Cardiac septum (tissue), 1 donor: ENCODE measurements at regions of chr3 and their contacts with region 1.

Region 1: DNA sequence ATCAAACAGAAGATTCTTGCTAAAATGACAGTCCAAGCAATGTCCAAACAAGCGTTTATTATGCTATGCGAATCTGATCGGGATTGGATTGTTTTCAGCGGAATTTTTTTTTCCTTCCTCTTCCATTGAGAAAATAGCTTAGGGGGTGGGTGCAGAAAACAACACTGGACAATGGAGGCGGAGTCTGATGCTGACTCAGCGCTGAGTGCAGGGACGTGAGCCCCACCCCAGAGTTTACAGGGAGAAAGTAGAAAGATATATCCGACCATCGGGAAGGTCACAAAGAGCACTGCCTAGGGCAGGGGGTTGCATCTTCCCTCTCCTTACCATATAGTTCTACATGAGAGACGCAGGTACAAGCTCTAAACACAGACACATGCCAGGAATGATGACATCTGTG is 117.0 kb downstream of the FOXP1 start:
- DNase-seq: no peak

Region 2: DNA sequence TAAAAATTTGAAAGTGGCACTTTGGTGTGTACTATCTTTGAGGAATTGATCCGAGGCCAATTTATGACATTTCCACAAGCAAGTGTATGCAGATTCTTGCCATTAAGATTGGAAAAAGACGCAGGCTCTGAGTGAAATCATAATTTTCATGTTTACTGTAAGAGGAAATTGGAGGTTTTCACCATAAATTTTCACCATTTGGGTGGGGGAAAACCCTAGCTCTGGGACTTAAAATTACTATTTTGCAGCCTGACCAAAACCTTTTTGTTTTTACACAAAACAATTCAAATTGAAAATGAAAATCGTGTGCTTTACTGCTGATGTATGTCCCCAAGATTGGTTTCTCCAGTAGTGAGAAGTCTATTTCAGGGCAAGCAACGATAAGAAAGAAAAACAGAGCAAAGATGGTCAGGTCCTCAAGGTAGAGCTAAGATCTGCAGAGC is 165.5 kb before region 1 on chr3:
- intact Hi-C with region 1: no loop called
- DNase-seq: no peak

Region 3: DNA sequence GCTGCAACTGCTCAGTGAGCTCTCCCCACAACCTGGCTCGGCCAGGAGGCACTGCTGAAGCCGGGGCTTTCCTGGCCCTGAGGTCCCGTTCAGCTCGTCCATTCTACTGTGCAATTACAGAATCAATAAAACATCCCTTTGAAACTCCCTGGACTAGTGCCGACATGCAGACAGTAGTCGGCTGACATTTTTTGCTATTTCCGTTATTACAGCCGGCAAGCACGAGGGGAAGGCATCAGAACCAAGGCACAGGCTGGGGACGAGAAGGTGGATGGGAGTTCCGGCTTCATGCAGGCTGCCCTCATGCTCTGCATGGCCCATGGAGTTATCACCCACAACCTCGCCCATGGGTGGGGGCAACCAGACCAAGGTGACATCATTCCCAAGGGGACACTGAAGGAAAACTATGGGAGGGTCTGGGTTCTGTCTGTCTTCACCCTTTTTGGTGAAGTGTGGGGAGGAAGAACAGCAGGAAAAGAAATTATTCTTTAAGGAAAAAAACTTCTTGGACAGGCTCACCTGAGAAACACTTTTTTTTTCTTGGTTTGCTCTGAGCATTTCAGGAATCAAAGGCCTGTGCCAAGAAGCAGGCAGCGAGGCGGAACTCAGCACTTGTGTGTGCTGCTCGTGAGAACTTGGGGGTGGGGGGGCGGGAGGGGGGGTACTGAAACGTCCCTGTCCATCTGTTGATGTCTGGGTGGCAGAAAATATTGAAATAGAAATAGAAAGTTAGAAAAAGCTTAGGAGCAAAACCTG is 37.5 kb before region 1 on chr3:
- intact Hi-C with region 1: loop called (anchors 5 kb)
- DNase-seq: no peak

Region 4: GRCh38 chr3:71495708-71496472 is 29.4 kb after region 1 on chr3:
- intact Hi-C with region 1: loop called (anchors 2 kb)
- DNase-seq: no peak